ENCODE measurements at regions of chr1 and their contacts with region 1.

Region 1: GRCh38 chr1:58903514-58904298 is 119.9 kb upstream of the JUN start:
- DNase-seq: peak; percentile 95

Region 2: DNA sequence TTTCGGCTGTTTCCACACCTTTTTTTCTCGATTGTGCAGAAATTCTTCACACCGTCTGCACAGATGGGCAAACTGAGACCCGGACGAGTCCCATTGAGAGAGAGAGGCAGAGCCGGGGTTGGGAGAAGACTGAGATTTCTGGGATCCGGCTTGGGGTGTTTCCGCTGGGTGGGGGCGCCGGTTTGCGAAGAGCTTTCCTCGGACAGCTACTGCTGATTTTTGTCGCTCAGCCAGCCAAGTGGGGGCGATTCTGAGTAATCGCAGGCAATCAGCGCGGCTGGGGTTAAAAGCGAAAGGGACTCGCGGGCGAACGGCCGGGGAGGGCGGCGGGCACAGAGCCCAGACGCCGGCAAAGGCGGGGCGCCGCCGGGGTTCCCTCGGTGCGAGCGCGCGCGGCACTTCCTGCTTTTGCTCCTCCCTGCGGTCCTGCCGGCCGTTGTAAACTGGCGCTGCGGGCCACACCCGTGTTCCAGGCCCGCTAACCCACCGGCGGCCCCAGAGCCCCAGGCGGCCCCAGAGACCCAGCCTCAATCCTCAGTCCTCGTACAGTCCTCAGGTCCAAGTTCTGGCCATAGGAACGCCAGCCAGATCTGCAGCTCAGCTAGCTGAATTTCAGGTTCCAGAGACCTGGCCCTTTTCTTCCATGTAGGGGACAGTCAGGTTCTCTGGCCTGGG is 87.5 kb before region 1 on chr1:
- intact Hi-C with region 1: loop called (anchors 5 kb)
- DNase-seq: peak; percentile 97

Region 3: GRCh38 chr1:58848818-58849411 is 54.8 kb before region 1 on chr1:
- intact Hi-C with region 1: loop called (anchors 2 kb)
- DNase-seq: peak; percentile 87

Region 4: GRCh38 chr1:59015708-59016107 is 112.0 kb after region 1 on chr1:
- intact Hi-C with region 1: loop called (anchors 2 kb)
- DNase-seq: no peak

Region 5: DNA sequence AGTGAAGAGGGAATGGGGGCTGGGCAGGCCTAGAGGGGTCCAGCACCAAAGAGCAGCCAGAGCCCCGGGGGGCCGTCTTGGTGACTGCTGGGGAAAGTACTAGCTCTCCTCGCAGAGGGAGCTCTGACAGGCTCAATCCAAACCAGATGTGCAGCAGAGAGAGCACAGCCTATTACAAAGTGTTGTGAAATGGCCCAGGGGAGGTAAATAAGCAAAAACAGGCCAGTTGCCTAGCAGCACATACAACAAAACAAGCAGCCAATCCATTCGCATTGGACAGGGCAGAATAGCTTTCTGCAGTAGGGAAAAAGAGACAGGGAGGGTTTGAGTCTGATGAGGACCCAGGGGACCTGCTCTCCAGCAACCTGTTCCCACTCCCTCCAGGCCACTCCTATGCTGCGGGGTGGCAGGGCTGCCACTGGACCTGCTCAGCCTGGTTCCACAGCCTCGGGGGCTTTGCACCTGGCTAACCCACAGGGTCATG is 153.5 kb after region 1 on chr1:
- intact Hi-C with region 1: loop called (anchors 5 kb)
- DNase-seq: no peak

Region 6: GRCh38 chr1:59150577-59151391 is 247.1 kb after region 1 on chr1:
- intact Hi-C with region 1: loop called (anchors 2 kb)
- DNase-seq: peak; percentile 89

Measured in cardiac septum (tissue), 1 donor.